ENCODE measurements at regions of chr1 and their contacts with region 1.

Region 1: DNA sequence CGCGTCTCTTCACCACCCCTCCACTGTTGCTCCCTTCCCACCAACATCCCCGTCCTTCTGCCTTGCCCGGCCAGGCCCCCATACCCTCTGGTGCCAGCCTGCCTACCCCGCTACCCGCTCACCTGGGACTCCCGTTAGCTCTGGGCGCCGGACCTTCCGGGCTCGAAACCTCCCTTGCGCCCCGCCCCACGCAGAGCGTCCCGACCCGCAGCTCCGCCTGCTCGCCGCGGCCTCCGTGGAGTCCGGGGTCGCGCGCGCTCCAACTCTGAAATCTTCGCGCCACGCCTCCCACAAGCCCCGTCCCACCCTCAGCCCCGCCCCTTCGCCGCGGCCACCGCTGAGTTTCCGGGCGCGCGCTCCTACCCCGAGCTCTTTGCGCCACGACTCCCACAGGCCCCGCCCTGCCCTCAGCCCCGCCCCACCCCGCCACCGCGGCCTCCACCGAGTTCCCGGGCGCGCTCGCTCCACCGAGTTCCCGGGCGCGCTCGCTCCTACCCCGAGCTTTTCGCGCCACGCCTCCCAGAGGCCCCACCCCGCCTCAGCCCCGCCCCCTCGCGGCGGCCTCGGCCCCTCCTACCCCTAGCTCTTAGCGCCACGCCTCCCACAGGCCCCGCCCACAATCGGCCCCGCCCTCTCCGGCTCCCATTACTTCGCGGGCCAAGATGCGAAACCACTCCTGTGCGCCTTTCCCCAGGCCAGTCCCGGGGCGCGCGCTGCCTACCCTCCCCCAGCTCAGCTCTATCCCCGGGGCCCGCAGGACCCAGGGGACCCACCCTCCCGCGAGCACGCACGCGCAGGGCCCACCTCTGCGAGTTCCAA is at the start of gene IFT25:
- DNase-seq: peak; percentile 99
- H3K4me3 Mint-ChIP-seq: peak within 1 kb of the TSS; percentile 98
- H3K27ac Mint-ChIP-seq: peak within 1 kb of the TSS; percentile 95
- H3K4me1 Mint-ChIP-seq: peaks cover 53% of the 10 kb centered on the region
- H3K27me3 Mint-ChIP-seq: no peaks in the 10 kb centered on the region
- total RNA-seq, gene IFT25: 53.9 and 55.8 TPM in 2 replicates

Region 2: DNA sequence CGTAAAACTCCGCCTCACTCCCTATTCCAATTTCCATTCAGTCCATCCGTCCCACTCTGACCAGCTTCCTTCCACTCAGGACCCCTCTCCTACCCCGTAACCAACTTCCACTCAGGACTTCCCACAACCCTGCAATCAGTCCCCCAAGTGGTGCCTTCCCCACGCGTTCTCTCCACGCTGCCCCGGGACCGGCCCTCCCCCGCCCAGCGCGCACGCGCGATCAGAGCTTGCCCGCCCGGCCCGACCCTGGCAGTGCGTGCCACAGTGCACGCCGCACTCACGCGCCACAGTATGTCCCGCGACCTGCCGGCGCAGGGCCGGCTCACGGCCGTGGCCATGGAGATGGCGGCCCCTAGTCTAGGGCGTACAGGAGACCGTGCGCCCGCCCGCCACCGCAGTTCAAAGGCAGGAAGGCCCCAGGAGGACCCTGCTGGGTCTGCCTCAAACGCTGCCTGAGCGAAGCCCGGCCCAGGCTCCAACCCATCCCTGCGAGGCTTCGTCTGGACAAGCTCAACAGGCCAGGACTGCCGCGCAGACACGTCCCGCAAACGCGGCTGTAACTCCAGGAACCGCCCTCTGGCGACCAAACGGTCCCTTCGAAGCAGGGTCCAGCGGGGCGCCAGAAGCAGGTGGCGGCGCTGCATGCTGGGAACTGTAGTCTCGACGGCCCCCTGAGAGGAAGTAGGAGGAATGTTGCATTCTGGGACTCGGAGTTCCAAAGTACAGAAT is 107.6 kb before region 1 on chr1 and contains the start of gene NDC1:
- intact Hi-C with region 1: loop called (anchors 1 kb)
- DNase-seq: peak; percentile 96
- H3K4me3 Mint-ChIP-seq: peak within 1 kb of the TSS; percentile 100
- H3K27ac Mint-ChIP-seq: peak within 1 kb of the TSS; percentile 100
- H3K4me1 Mint-ChIP-seq: peaks cover 25% of the 10 kb centered on the region
- H3K27me3 Mint-ChIP-seq: no peaks in the 10 kb centered on the region
- total RNA-seq, gene NDC1: 39.7 and 40.8 TPM in 2 replicates

Region 3: DNA sequence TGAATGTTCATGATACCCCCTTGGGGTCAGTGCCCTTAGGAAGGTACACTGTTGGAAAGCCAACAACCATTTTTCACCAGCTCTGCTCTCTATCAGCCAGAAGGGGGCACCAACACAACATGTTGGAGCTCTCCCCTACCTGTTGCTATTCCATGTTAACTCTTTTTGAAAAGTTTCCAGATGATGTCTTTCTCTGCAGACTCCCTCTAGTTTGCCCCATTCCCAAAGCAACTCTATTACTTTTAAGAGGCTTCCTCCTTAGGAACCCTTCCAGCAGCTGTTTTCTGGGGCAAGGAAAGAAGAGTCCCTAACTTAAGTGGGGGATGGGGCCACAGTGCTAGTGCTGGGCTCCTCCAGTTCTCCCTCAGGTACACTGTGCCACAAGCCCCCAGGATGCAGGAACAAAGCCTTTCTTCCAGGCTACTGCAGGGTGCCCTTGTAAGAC is 84.7 kb before region 1 on chr1:
- intact Hi-C with region 1: loop called (anchors 1 kb)
- DNase-seq: peak; percentile 86
- H3K4me3 Mint-ChIP-seq: no peak overlapping the region
- H3K27ac Mint-ChIP-seq: no peak overlapping the region
- H3K4me1 Mint-ChIP-seq: peaks cover 5% of the 10 kb centered on the region
- H3K27me3 Mint-ChIP-seq: no peaks in the 10 kb centered on the region

Region 4: DNA sequence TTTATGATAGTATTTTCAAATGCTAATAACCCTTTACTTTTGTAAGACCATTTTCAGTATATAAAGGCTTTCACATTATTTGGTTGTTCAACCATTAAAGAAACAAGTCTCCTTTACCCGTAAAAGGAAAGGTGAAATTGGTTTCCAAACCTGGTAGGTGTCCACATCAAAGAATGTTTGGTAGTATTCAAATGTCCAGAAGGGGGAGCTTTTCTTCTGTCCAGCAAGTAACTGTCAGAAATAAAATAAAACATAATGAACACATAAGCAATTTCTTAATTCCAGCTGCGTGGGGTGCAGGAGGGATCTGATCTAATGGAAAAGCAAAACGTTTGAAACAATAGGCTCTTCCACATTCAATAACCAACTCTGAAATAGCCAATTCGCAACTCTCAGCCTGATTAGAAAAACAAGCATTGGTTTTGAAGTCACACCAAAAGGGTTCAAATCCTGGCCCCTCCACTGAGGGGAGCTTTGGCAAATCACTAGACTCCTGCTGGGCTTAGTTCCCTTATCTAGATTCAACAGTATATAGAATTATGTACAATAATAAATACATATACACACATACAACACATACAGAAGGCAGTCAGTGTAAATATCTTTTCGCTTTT is 67.0 kb before region 1 on chr1:
- intact Hi-C with region 1: loop called (anchors 2 kb)
- DNase-seq: peak; percentile 62
- H3K4me3 Mint-ChIP-seq: no peak overlapping the region
- H3K27ac Mint-ChIP-seq: no peak overlapping the region
- H3K4me1 Mint-ChIP-seq: peaks cover 3% of the 10 kb centered on the region
- H3K27me3 Mint-ChIP-seq: no peaks in the 10 kb centered on the region

Region 5: GRCh38 chr1:53889304-53890298 is 56.0 kb before region 1 on chr1 and contains the start of gene YIPF1:
- intact Hi-C with region 1: loop called (anchors 1 kb)
- DNase-seq: peak; percentile 98
- H3K4me3 Mint-ChIP-seq: peak within 1 kb of the TSS; percentile 98
- H3K27ac Mint-ChIP-seq: peak within 1 kb of the TSS; percentile 90
- H3K4me1 Mint-ChIP-seq: peaks cover 34% of the 10 kb centered on the region
- H3K27me3 Mint-ChIP-seq: no peaks in the 10 kb centered on the region
- total RNA-seq, gene YIPF1: 14.6 and 15.6 TPM in 2 replicates

Region 6: GRCh38 chr1:53919675-53920066 is 26.0 kb before region 1 on chr1:
- intact Hi-C with region 1: loop called (anchors 2 kb)
- DNase-seq: no peak
- H3K4me3 Mint-ChIP-seq: no peak overlapping the region
- H3K27ac Mint-ChIP-seq: peak overlapping the region; percentile 84
- H3K4me1 Mint-ChIP-seq: peaks cover 36% of the 10 kb centered on the region
- H3K27me3 Mint-ChIP-seq: no peaks in the 10 kb centered on the region

Region 7: DNA sequence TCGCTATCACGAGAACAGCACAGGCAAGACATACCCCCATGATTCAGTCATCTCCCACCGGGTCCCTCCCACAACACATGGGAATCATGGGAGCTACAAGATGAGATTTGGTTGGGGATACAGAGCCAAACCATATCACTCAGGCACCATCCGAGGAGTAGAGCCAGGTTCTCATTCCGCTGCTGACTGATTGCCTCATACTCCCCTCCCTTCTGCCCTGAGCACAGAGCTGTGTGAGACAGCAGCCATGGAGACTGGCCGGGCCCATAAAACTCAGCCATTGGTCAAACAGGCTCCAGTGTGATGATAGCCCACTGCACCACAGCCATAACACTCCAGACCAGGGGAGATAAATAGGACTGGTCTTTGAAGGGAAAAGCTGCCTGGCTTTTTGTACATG is 792.6 kb after region 1 on chr1:
- intact Hi-C with region 1: no loop called
- DNase-seq: no peak
- H3K4me3 Mint-ChIP-seq: no peak overlapping the region
- H3K27ac Mint-ChIP-seq: no peak overlapping the region
- H3K4me1 Mint-ChIP-seq: peaks cover 4% of the 10 kb centered on the region
- H3K27me3 Mint-ChIP-seq: no peaks in the 10 kb centered on the region

Region 8: GRCh38 chr1:54764133-54764921 is 818.7 kb after region 1 on chr1 and contains the start of gene PARS2:
- intact Hi-C with region 1: loop called (anchors 5 kb)
- DNase-seq: peak; percentile 99
- H3K4me3 Mint-ChIP-seq: peak within 1 kb of the TSS; percentile 93
- H3K27ac Mint-ChIP-seq: peak within 1 kb of the TSS; percentile 94
- H3K4me1 Mint-ChIP-seq: peaks cover 11% of the 10 kb centered on the region
- H3K27me3 Mint-ChIP-seq: no peaks in the 10 kb centered on the region
- total RNA-seq, gene PARS2: 7.1 and 7.8 TPM in 2 replicates